Vagina (tissue), 2 donors: ENCODE measurements at regions of chr2 and their contacts with region 1.

Region 1: DNA sequence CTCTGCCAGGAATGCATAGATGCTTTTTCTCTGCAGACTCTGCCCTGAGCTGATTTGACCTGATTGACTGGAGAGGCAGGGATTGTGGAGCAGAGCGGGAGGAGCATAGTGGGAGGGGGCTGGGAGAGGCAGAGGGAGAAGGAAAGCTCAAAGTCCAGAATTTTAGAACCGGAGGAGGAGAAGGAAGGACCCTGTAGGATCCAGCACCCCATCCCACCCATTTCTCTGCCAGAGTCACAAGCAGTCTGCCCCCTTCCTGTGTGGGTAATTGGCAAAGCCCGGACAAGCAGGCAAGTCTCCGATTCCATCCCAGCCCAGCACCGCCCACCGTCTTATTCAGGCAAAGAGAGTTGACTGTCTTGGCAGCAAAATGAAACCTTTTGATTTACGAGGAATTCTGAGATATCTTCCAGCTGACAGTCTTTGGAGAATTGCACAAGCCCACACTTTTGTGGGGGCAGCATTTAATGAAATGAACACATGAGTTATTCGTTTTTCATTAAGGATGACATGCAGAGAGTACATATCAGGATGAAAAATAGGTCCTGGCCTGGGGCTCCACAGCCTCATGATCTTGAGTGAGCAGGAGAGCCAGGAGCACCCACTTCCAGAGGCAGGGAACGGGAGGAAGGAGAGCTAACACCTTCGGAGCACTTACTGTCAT is 103.1 kb downstream of the MCFD2 start:
- DNase-seq: peak in 1 of 2 donors; percentile 94
- H3K4me3 ChIP-seq: no peak overlapping the region
- H3K27ac ChIP-seq: peak overlapping the region; percentile 72
- H3K4me1 ChIP-seq: peaks cover 52% of the 10 kb centered on the region
- H3K27me3 ChIP-seq: no peaks in the 10 kb centered on the region
- CTCF ChIP-seq: no peak
- POLR2A ChIP-seq: no peak

Region 2: DNA sequence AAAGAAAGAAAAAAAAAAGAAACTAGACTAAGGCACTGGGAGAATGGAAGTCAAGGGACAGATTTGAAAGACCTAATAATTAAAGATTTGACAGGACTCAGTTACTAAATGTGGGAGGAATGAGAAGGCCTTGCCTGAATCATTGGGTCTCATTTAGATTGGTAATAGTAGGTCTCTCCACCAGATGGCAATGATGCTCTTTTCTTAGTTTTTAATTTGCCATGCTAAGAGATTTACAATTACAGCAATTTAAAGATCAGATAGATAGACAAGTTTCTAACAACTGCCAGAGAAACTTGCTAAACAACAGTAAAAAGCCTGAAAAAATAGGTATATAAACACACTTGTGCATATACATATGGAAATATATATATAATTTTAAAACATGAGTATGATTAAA is 180.1 kb before region 1 on chr2:
- intact Hi-C with region 1: no loop called
- DNase-seq: no peak
- H3K4me3 ChIP-seq: no peak overlapping the region
- H3K27ac ChIP-seq: no peak overlapping the region
- H3K4me1 ChIP-seq: no peaks in the 10 kb centered on the region
- H3K27me3 ChIP-seq: no peaks in the 10 kb centered on the region
- CTCF ChIP-seq: peak; percentile 3 to 50 (median 35)
- POLR2A ChIP-seq: no peak

Region 3: DNA sequence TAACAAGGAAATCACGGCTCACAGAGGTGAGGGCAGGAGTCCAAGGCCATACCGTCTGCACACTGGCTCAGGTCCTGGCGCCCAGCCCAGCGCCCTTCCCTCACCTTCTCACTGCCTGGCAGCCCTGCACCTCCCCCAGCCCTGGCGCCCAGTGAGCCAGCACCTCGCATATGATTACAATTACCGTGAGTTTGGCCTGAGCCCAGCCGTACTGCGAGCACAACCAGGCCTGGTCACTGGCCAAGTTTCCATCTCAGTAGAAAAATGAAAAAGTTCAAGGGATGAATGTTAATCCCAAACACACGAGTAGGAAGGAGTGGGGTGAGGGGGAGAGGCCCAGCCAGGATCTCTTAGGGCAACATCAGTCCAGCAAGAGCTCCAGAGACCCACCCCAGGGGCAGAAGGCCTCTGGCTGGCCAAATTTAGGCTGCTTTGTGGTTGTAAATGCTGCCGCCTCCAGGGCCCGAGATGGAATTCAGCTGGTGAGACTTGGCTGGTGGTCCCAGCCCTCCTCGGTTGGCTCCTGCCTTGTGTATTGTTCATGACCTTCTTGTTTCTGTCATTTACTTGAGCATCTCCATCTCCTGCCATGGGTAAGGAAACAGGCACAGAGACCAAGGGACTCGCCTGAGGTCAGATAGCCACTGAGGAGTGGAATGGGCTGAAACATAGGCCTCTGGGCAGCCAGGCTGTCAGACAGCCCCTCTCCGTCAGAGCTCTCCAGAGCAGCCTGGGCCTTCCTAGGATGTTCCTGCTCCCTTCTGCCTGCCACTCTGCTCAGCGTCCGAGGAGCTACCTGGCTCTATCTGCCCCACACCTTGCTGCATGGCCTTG is 35.0 kb after region 1 on chr2:
- intact Hi-C with region 1: loop called (anchors 2 kb)
- DNase-seq: no peak
- H3K4me3 ChIP-seq: no peak overlapping the region
- H3K27ac ChIP-seq: peak overlapping the region; percentile 89
- H3K4me1 ChIP-seq: peaks cover 61% of the 10 kb centered on the region
- H3K27me3 ChIP-seq: no peaks in the 10 kb centered on the region
- CTCF ChIP-seq: no peak
- POLR2A ChIP-seq: no peak

Region 4: DNA sequence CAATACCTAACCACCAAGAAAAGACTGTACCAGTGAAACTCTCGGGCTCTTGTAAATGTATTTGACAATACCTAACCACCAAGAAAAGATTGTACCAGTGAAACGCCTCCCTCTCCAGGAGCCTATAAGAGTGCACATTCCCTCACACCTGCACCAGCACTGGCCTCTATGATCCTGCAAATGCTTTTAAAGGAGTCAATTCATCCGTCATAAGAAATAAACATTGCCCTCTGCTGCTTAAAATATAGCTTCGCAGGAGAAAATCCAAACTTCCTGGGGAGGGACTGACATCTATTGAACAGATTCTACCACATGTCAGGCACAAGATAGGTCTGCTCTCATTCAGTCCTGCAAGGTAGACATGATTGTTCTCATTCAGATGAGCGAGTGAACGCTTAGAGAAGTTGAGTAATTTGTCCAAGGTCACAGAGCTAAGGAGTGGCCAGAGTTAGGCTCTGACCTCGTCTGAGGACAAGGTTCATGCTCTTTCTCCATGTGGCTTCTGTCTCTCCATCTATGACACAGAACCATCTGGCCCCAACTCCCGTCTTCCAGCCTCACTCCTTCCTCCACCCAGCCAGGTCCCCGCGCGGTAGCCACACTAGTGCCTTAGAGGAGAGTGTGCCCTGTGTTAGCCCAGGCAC is 64.4 kb after region 1 on chr2:
- intact Hi-C with region 1: loop called (anchors 10 kb)
- DNase-seq: no peak
- H3K4me3 ChIP-seq: no peak overlapping the region
- H3K27ac ChIP-seq: peak overlapping the region; percentile 36
- H3K4me1 ChIP-seq: peaks cover 63% of the 10 kb centered on the region
- H3K27me3 ChIP-seq: no peaks in the 10 kb centered on the region
- CTCF ChIP-seq: peak; percentile 24 to 50 (median 38)
- POLR2A ChIP-seq: no peak